ENCODE measurements at regions of chr18 and their contacts with region 1.

Region 1: DNA sequence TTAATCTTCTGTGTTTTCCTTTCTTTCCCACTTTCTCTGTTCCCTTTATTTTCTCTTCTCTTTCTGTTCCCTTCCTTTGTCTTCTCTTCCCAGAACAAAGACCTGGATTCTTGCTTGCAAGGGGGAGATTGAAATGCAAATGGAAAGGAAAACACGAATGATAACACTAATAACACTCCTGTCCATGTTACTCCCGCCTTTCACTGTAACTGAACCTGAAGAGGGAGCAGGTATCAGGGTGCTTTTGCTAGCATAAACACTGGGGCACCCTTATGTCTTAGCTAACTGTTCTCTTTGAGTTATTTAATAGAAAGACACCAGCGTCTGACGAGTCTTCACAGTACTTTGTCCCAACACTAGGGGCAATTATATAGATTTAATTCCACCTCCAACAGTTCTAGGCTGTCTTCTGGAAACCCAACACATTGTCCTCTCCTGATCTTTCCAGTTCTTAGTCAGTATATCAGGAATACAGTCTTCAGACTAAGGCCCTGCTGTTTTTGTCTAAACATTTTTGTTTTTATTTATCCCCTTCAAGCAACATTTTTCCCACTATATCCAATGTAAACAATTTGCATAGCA is 99.2 kb downstream of the PTPRM start:
- DNase-seq: no peak
- ATAC-seq: peak; percentile 42
- H3K4me3 ChIP-seq: no peak overlapping the region
- H3K27ac ChIP-seq: no peak overlapping the region
- H3K4me1 ChIP-seq: no peaks in the 10 kb centered on the region
- H3K27me3 ChIP-seq: peaks cover 6% of the 10 kb centered on the region; the same call in 1 of the 2 replicates
- CTCF ChIP-seq: peak in 1 of 3 experiments; percentile 17; a peak in 2 of 6 replicates
- POLR2A ChIP-seq: no peak
- RAD21 ChIP-seq: no peak

Region 2: GRCh38 chr18:7617738-7618422 is 48.4 kb before region 1 on chr18:
- CTCF ChIA-PET with region 1: no interaction called
- POLR2A ChIA-PET with region 1: no interaction called
- RAD21 ChIA-PET with region 1: no interaction called
- intact Hi-C with region 1: loop called (anchors 5 kb)
- DNase-seq: no peak
- ATAC-seq: no peak
- H3K4me3 ChIP-seq: no peak overlapping the region
- H3K27ac ChIP-seq: no peak overlapping the region
- H3K4me1 ChIP-seq: no peaks in the 10 kb centered on the region
- H3K27me3 ChIP-seq: peaks cover 4% of the 10 kb centered on the region; the same call in 1 of the 2 replicates
- CTCF ChIP-seq: no peak
- POLR2A ChIP-seq: no peak
- RAD21 ChIP-seq: no peak

Measured in HCT116 (cell line).